ENCODE measurements at regions of chr19 and their contacts with region 1.

Region 1: GRCh38 chr19:53879140-53880081 is 2.6 kb upstream of the PRKCG start:
- DNase-seq: peak; percentile 95 to 96
- ATAC-seq: peak; percentile 96 to 100 (median 98)
- H3K4me3 ChIP-seq: peak overlapping the region; percentile 40 to 71 (median 60)
- H3K27ac ChIP-seq: peak overlapping the region in 6 of 10 donors; percentile 16 to 55 (median 22)
- H3K4me1 ChIP-seq: peaks cover 5 to 59% (median 22%) of the 10 kb centered on the region in 9 donors
- H3K27me3 ChIP-seq: peaks cover 15 to 49% (median 44%) of the 10 kb centered on the region in 7 donors
- CTCF ChIP-seq: no peak

Region 2: DNA sequence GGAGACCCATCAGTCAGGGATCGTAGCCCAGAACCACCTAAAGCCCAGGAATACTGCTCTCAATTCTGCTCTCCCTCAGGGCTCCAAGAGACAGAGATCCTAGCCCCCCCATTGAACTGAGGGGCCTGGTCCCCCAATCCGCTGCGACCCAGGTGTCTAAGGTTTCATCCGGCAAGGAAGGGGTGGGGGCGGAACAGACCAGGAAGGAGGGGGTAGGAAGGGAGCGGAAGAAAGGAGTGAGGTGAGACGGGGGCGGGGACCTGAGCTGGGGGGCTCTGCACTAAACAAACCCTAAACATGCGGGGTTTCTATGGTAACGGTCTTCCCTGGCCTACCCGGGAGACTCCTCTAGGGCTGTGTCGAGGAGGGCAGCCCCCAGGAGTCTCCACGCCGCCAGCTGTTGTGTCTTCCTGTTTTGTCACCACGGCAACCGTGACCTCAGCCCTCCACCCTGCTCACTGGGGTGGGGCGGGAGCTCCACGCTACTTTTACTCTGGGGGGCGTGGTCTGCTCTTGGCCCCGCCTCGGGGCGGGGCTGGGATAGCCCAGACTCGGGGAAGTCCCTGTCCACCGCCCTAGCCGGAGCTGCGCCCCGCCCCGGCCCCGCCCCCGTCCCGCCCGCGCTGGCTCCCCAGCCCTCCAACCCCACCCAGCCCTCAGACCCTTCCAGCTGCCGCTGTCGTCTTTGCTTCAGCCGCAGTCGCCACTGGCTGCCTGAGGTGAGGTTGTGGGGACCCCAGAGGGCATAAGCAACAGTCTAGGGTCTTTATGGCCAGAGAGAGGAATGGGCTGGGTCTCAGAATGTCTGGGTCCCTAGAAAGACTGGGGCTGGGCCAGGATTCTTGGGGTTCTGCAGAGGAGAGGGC is 12.0 kb before region 1 on chr19 and contains the start of gene MYADM:
- intact Hi-C with region 1: loop called in 1 of 10 experiments (anchors 1 kb)
- DNase-seq: peak; percentile 99
- ATAC-seq: peak; percentile 76 to 95 (median 84)
- H3K4me3 ChIP-seq: peak within 1 kb of the TSS; percentile 59 to 97 (median 80)
- H3K27ac ChIP-seq: peak within 1 kb of the TSS; percentile 63 to 99 (median 97)
- H3K4me1 ChIP-seq: peaks cover 3 to 45% (median 39%) of the 10 kb centered on the region in 9 donors
- H3K27me3 ChIP-seq: no peaks in the 10 kb centered on the region
- CTCF ChIP-seq: no peak
- total RNA-seq, gene MYADM: 87.4 to 265 (median 135) TPM

Region 3: DNA sequence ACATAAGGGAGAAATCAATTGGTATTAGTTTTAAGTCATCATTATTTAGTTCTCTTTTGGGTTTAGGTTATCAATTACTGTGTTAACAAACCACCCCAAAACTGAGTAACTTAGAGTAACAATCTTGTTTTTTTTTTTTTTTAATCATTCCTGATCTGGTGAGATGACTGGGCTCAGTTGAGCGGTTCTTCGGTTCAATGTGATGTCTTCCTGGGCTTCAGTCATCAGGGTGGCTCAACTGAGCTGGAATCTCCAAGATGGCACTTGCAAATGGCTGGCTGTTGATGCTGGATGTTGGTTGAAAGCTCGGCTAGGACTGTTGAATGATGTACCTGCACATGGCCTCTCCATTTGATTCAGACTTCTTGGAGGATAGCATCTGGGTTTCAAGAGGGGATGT is 205.0 kb after region 1 on chr19:
- intact Hi-C with region 1: no loop called
- DNase-seq: no peak
- ATAC-seq: no peak
- H3K4me3 ChIP-seq: no peak overlapping the region
- H3K27ac ChIP-seq: no peak overlapping the region
- H3K4me1 ChIP-seq: no peaks in the 10 kb centered on the region
- H3K27me3 ChIP-seq: peaks cover 0 to 7% (median under 1%) of the 10 kb centered on the region in 7 donors
- CTCF ChIP-seq: no peak